Colonic mucosa (tissue), 4 donors: ENCODE measurements at regions of chrX and their contacts with region 1.

Region 1: GRCh38 chrX:51144852-51145442 is 187.7 kb upstream of the NUDT10 start:
- DNase-seq: peak; percentile 41
- H3K4me3 ChIP-seq: no peak overlapping the region
- H3K27ac ChIP-seq: no peak overlapping the region
- H3K4me1 ChIP-seq: no peaks in the 10 kb centered on the region
- H3K27me3 ChIP-seq: no peaks in the 10 kb centered on the region
- CTCF ChIP-seq: peak; percentile 65

Region 2: DNA sequence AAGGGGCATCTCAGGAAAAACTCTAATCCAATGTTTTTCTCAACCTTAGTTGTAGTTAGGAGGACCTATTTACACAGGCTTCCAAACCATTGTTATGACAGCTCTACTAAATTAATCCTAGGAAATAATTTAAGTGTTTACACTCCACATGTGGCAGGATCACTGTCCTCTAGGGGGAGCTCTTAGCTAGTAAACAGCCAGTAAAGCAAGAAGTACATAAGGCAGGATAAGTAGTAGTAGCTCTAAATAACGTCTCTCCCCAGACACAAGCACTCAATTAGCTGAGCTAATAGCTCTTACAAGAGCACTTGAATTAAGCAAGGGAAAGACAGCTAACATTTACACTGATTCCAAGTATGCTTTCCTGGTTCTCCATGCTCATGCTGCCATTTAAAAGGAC is 314.2 kb after region 1 on chrX:
- intact Hi-C with region 1: loop called (anchors 10 kb)
- DNase-seq: peak; percentile 21
- H3K4me3 ChIP-seq: no peak overlapping the region
- H3K27ac ChIP-seq: no peak overlapping the region
- H3K4me1 ChIP-seq: no peaks in the 10 kb centered on the region
- H3K27me3 ChIP-seq: no peaks in the 10 kb centered on the region
- CTCF ChIP-seq: peak; percentile 16